Dendritic cell treated with granulocyte-macrophage colony-stimulating factor and Interleukin-4, amounts not matched to agents 40 ng/mL and 50 ng/mL, for 4 days (primary cell): ENCODE measurements at regions of chr19 and their contacts with region 1.

Region 1: GRCh38 chr19:41859618-41860418 is at the start of gene RPS19:
- H3K4me3 Mint-ChIP-seq: peak within 1 kb of the TSS; percentile 96
- H3K27ac Mint-ChIP-seq: peak within 1 kb of the TSS; percentile 94
- H3K4me1 Mint-ChIP-seq: peaks cover 47% of the 10 kb centered on the region
- H3K27me3 Mint-ChIP-seq: no peaks in the 10 kb centered on the region

Region 2: DNA sequence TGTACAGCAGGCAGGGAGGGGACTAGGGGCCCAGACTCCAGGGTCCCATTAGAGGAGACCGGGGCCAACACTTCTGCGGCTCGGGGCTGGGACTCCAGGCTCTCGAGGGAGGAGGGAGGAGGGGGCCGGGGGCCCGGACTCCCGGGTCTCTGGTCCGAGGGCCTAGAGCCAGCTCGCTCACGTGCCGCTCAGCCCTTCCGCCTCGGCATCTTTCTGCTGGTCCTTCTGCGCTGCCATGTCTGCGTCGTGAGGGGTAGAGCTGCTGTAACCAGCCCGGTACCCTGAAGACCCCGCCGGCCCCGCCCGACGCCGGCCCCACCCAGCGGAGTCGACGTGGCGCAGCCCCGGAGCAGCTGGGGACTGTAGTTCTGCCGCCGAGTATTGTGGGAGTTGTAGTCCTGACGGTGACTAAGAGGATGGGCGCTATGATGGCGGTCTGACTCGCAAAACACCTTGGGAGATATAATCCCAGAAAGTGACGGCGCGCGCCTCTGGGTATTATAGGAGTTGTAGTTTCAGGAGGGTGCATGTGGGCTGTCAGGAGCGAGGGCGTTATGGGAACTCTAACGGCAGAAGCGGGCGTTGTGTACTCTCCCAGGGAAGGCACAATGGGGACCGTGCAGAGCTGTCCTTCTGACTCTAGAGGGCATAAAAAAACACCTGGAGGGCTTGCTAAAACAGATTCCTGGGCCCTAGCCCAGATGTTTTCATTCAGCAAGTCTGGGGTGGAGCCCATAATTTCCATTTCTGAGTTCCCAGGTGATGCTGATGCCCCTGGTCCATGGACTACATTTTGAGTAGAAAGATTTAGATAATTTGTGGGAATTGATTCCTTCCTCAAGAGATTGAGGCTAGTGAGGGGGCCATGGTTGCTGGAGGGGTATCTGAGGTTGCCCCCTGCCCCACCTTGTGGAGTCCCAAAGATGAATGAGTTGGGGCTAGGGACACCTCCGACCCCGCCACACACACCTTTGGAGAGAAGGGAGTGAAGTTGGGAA is 99.5 kb after region 1 on chr19 and contains the start of gene RABAC1:
- intact Hi-C with region 1: loop called (anchors 5 kb)
- H3K4me3 Mint-ChIP-seq: peak within 1 kb of the TSS; percentile 91
- H3K27ac Mint-ChIP-seq: peak within 1 kb of the TSS; percentile 54
- H3K4me1 Mint-ChIP-seq: peaks cover 30% of the 10 kb centered on the region
- H3K27me3 Mint-ChIP-seq: no peaks in the 10 kb centered on the region